CD8-positive, alpha-beta T cell (primary cell): ENCODE measurements at regions of chrX and their contacts with region 1.

Region 1: GRCh38 chrX:49247916-49248811 is 12.9 kb downstream of the CCDC22 start:
- DNase-seq: no peak
- ATAC-seq: no peak
- H3K4me3 ChIP-seq: no peak overlapping the region
- H3K4me3 Mint-ChIP-seq: no peak overlapping the region
- H3K27ac ChIP-seq: no peak overlapping the region
- H3K27ac Mint-ChIP-seq: no peak overlapping the region
- H3K4me1 ChIP-seq: no peaks in the 10 kb centered on the region
- H3K4me1 Mint-ChIP-seq: peaks cover 7% of the 10 kb centered on the region
- H3K27me3 ChIP-seq: no peaks in the 10 kb centered on the region
- H3K27me3 Mint-ChIP-seq: no peaks in the 10 kb centered on the region
- CTCF ChIP-seq: no peak

Region 2: GRCh38 chrX:49100704-49101628 is 147.2 kb before region 1 on chrX:
- CTCF ChIA-PET with region 1: no interaction called
- POLR2A ChIA-PET with region 1: no interaction called
- intact Hi-C with region 1: no loop called
- DNase-seq: peak; percentile 71 to 94 (median 86)
- ATAC-seq: peak; percentile 89
- H3K4me3 ChIP-seq: peak overlapping the region; percentile 74
- H3K4me3 Mint-ChIP-seq: peak overlapping the region; percentile 89
- H3K27ac ChIP-seq: peak overlapping the region; percentile 71 to 81
- H3K27ac Mint-ChIP-seq: peak overlapping the region; percentile 94
- H3K4me1 ChIP-seq: peaks cover 6% of the 10 kb centered on the region
- H3K4me1 Mint-ChIP-seq: peaks cover 7% of the 10 kb centered on the region
- H3K27me3 ChIP-seq: no peaks in the 10 kb centered on the region
- H3K27me3 Mint-ChIP-seq: no peaks in the 10 kb centered on the region
- CTCF ChIP-seq: no peak

Region 3: GRCh38 chrX:49209434-49210251 is 38.5 kb before region 1 on chrX:
- CTCF ChIA-PET with region 1: no interaction called
- POLR2A ChIA-PET with region 1: no interaction called
- intact Hi-C with region 1: no loop called
- DNase-seq: peak in 2 of 9 experiments; percentile 23 to 34
- ATAC-seq: peak; percentile 56
- H3K4me3 ChIP-seq: no peak overlapping the region
- H3K4me3 Mint-ChIP-seq: peak overlapping the region; percentile 39
- H3K27ac ChIP-seq: no peak overlapping the region
- H3K27ac Mint-ChIP-seq: no peak overlapping the region
- H3K4me1 ChIP-seq: no peaks in the 10 kb centered on the region
- H3K4me1 Mint-ChIP-seq: no peaks in the 10 kb centered on the region
- H3K27me3 ChIP-seq: no peaks in the 10 kb centered on the region
- H3K27me3 Mint-ChIP-seq: peaks cover 2% of the 10 kb centered on the region
- CTCF ChIP-seq: no peak

Region 4: DNA sequence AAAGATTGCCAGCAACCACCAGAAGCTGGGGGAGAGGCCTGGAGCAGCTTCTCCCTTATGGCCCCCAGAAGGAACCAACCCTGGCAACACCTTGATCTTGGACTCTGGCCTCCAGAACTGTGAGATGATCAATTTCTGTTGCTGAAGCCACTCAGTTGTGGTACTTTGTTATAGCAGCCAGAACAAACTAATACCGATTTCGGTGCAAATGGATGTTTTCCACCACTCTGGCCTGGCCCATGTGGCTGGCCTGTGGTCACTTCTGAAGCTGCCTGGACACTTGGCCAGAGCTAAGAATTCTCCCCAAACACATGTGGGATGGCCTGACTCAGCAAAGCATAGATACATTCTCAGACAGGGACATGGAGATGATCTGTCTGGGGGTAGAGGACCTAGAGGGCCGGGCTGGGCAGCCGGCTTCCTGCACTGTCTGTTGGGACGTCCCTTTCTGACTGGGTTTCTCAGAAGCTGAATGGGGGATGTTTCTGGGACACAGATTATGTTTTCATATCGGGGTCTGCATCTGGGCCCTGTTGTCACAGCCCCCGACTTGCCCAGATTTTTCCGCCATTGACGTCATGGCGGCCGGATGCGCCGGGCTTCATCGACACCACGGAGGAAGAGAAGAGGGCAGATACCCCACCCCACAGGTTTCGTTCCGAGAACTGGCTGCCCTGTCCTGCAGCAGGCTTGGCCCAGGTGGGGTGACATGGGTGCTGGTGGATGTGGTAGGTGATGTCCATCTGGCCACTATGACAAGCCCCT is 12.2 kb after region 1 on chrX:
- CTCF ChIA-PET with region 1: no interaction called
- POLR2A ChIA-PET with region 1: interaction called, 3 read pairs
- intact Hi-C with region 1: loop called in 1 of 2 experiments (anchors 1 kb)
- DNase-seq: no peak
- ATAC-seq: no peak
- H3K4me3 ChIP-seq: no peak overlapping the region
- H3K4me3 Mint-ChIP-seq: no peak overlapping the region
- H3K27ac ChIP-seq: no peak overlapping the region
- H3K27ac Mint-ChIP-seq: no peak overlapping the region
- H3K4me1 ChIP-seq: peaks cover 28% of the 10 kb centered on the region
- H3K4me1 Mint-ChIP-seq: peaks cover 36% of the 10 kb centered on the region
- H3K27me3 ChIP-seq: no peaks in the 10 kb centered on the region
- H3K27me3 Mint-ChIP-seq: no peaks in the 10 kb centered on the region
- CTCF ChIP-seq: no peak

Region 5: DNA sequence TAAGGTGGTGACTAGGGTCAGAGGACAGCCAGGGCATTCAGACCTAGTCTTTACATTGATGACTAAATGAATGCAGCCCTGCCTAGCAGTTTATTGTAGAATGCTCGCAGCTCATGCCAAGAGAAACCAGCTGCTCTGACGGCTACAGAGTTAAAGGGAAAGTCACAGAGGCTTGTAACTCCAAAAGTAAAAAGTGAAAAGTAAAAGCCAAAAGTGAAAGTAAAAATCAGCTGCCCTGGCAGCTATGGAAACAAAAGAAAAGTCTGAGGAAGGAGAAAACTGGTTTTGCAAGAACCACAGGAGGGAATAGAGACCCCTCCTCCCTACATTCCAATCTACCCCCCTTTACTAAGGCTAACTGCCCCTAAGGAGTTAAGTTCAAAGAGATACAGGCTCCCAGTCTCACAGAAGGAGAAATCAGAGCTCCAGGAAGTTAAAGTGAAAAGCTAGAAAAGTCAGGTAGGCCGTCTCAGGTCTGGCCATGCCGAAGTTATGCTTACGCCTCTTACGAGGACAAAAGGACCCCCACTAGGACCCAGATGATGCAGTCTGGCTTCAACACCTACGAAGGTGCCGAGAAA is 61.3 kb after region 1 on chrX:
- CTCF ChIA-PET with region 1: no interaction called
- POLR2A ChIA-PET with region 1: no interaction called
- intact Hi-C with region 1: no loop called
- DNase-seq: peak in 7 of 9 experiments; percentile 1 to 64 (median 35)
- ATAC-seq: peak; percentile 74
- H3K4me3 ChIP-seq: peak overlapping the region; percentile 36 to 54
- H3K4me3 Mint-ChIP-seq: peak overlapping the region; percentile 86
- H3K27ac ChIP-seq: peak overlapping the region; percentile 64 to 78
- H3K27ac Mint-ChIP-seq: peak overlapping the region; percentile 97
- H3K4me1 ChIP-seq: peaks cover 18% of the 10 kb centered on the region
- H3K4me1 Mint-ChIP-seq: peaks cover 21% of the 10 kb centered on the region
- H3K27me3 ChIP-seq: no peaks in the 10 kb centered on the region
- H3K27me3 Mint-ChIP-seq: no peaks in the 10 kb centered on the region
- CTCF ChIP-seq: no peak